ENCODE measurements at regions of chr4 and their contacts with region 1.

Region 1: DNA sequence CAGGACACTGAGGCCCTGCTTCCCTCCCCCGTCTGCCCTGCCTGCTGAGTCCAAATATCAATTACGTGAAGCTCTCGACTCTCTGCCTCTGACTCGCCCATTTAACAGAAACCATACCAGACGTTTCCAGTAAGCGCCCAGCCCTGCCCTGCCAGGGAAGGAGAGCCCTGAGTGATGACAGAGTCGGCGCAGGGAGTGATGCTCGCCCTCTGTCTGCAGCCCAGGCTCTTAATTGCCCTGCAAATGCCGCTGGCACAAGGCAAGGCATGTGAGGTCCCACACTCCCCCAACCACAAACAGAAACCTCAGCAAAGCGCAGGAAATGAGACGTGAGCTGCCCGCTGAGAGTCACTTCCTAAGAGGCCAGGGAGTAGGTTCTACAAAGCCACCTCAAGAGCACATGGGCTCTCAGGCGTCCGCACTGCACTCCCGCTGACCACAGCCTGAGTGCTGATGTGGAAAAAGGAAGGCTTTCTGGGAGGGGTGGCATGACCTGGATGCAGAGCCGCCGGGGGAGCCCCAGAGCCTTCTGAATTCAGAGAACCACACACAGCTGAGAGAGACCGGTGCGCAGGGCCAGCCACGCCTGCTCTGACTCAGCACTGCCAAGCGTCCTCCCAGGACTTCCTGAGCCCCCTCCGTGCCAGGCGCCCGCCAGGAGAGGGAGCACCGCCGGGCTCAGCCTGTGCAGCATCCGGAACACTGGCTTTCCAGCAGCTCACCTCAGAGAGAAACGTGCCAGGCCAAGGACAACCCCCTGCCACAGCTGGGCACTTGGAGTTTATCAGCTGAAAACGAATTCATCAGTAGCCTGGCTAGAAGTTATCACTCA is 5.3 kb downstream of the ZFYVE28 start:
- DNase-seq: peak; percentile 67 to 96 (median 86)
- ATAC-seq: peak; percentile 76 to 78 (median 78)
- H3K4me3 ChIP-seq: peak overlapping the region; percentile 42 to 58
- H3K4me3 Mint-ChIP-seq: peak overlapping the region; percentile 69 to 85 (median 78)
- H3K27ac ChIP-seq: peak overlapping the region; percentile 93
- H3K27ac Mint-ChIP-seq: peak overlapping the region; percentile 91 to 95
- H3K4me1 ChIP-seq: peaks cover 21 to 79% of the 10 kb centered on the region in 2 experiments
- H3K4me1 Mint-ChIP-seq: peaks cover 65 to 79% (median 79%) of the 10 kb centered on the region in 3 donors
- H3K27me3 ChIP-seq: peaks cover 0 to 22% of the 10 kb centered on the region in 2 experiments
- H3K27me3 Mint-ChIP-seq: peaks cover 3 to 7% of the 10 kb centered on the region in 2 donors

Region 2: DNA sequence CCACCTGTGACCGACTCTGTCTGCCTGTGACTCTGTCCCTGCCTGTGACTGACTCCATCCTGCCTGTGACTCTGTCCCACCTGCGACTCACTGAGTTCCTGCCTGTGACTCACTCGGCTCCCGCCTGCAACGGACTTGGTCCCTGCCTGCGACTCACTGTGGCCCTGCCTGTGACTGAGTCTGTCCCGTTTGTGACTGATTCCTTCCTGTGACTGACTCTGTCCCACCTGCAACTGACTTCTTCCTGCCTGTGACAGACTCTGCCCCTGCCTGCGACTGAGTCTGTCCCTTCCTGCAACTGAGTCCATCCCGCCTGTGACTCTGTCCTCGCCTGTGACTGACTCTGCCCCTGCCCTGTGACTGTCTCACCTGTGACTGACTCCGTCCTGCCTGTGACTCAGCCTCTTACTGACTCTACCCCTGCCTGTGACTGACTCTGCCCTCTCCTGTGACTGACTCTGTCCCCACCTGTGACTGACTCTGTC is 1075.7 kb before region 1 on chr4:
- CTCF ChIA-PET with region 1: no interaction called
- POLR2A ChIA-PET with region 1: no interaction called
- DNase-seq: peak in 3 of 35 experiments; percentile 29 to 46 (median 44)
- ATAC-seq: peak in 3 of 4 experiments; percentile 77 to 82 (median 79)
- H3K4me3 ChIP-seq: no peak overlapping the region
- H3K4me3 Mint-ChIP-seq: peak overlapping the region in 1 of 3 donors; percentile 18
- H3K27ac ChIP-seq: no peak overlapping the region
- H3K27ac Mint-ChIP-seq: peak overlapping the region; percentile 87 to 92
- H3K4me1 ChIP-seq: peaks cover 0 to 4% of the 10 kb centered on the region in 2 experiments
- H3K4me1 Mint-ChIP-seq: peaks cover 0 to 28% (median 19%) of the 10 kb centered on the region in 3 donors
- H3K27me3 ChIP-seq: no peaks in the 10 kb centered on the region
- H3K27me3 Mint-ChIP-seq: no peaks in the 10 kb centered on the region

Region 3: GRCh38 chr4:2281575-2282343 is 131.3 kb before region 1 on chr4:
- CTCF ChIA-PET with region 1: interaction called, 3 to 17 read pairs
- POLR2A ChIA-PET with region 1: interaction called, 4 to 13 read pairs
- DNase-seq: peak; percentile 59 to 97 (median 90)
- ATAC-seq: peak; percentile 93 to 97 (median 96)
- H3K4me3 ChIP-seq: peak overlapping the region in 1 of 2 donors; percentile 18
- H3K4me3 Mint-ChIP-seq: peak overlapping the region; percentile 52 to 82 (median 65)
- H3K27ac ChIP-seq: peak overlapping the region; percentile 96
- H3K27ac Mint-ChIP-seq: peak overlapping the region; percentile 98 to 99
- H3K4me1 ChIP-seq: peaks cover 20 to 63% of the 10 kb centered on the region in 2 experiments
- H3K4me1 Mint-ChIP-seq: peaks cover 34 to 56% (median 49%) of the 10 kb centered on the region in 3 donors
- H3K27me3 ChIP-seq: no peaks in the 10 kb centered on the region
- H3K27me3 Mint-ChIP-seq: no peaks in the 10 kb centered on the region

Region 4: DNA sequence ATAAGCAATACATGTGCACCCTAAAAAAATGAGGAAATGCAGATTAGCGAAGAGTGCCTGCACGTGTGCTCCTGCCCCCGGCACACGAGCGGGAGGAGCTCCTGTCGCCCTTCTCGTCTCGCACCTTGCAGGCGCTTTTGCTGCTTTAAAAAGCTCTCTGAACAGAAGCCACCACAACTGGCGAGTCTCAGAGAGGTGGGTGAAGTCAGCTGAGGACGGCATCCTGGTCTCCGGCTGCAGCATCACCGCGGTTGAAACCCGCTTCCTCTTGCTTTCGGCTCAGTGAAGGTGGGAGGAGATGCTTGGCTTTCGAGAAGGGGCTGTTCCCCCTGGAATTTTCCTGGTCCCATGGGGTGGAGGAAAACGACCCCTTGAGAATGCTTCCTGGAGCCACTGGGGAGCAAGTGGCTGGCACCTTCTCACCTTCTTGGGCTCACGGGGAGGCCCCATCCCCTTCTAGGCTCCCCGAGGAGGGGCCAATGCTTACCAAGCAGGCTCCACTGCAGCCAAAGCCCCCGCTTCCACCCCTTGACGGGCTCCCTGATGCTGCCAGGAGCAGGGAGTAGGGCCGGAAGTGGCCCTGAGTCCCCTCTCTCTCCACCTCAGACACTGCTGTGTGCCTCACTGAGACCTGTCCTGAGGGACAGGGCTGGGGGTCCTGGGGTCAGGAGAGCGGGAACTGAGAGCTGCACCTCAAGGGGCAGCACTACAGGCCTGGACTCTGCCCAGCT is 122.0 kb before region 1 on chr4:
- CTCF ChIA-PET with region 1: interaction called in 1 of 2 experiments, 12 read pairs
- POLR2A ChIA-PET with region 1: interaction called in 1 of 2 experiments, 5 read pairs
- DNase-seq: peak; percentile 48 to 93 (median 84)
- ATAC-seq: peak; percentile 92 to 94 (median 93)
- H3K4me3 ChIP-seq: peak overlapping the region; percentile 15 to 42
- H3K4me3 Mint-ChIP-seq: peak overlapping the region; percentile 56 to 79 (median 65)
- H3K27ac ChIP-seq: peak overlapping the region; percentile 96
- H3K27ac Mint-ChIP-seq: peak overlapping the region; percentile 96 to 98
- H3K4me1 ChIP-seq: peaks cover 32 to 68% of the 10 kb centered on the region in 2 experiments
- H3K4me1 Mint-ChIP-seq: peaks cover 42 to 60% (median 55%) of the 10 kb centered on the region in 3 donors
- H3K27me3 ChIP-seq: no peaks in the 10 kb centered on the region
- H3K27me3 Mint-ChIP-seq: no peaks in the 10 kb centered on the region

Region 5: DNA sequence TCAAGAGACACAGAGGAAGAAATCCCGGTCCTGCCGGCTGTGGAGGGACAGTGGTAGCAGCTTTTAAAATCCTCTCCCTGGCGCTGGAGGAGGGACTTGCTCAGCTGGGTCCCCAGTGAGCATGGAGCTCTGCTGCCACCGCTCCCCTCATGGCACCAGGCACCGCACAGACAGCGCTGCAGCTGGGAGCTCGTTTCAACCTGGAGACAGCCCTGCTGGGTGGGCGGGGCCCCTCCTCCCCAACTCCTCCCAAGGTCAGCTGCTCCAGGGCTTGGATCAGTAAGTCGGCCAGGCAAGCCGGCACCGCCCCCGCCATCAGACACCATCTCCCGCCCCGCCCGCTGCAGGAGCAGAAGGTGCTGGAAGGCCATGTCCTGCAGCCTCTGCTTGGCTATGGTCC is 11.1 kb before region 1 on chr4:
- CTCF ChIA-PET with region 1: interaction called, 4 to 11 read pairs
- POLR2A ChIA-PET with region 1: interaction called, 4 to 6 read pairs
- DNase-seq: peak in 9 of 35 experiments; percentile 10 to 46 (median 20)
- ATAC-seq: peak; percentile 57 to 73 (median 68)
- H3K4me3 ChIP-seq: peak overlapping the region; percentile 39 to 67
- H3K4me3 Mint-ChIP-seq: peak overlapping the region; percentile 65 to 84 (median 77)
- H3K27ac ChIP-seq: no peak overlapping the region
- H3K27ac Mint-ChIP-seq: no peak overlapping the region
- H3K4me1 ChIP-seq: peaks cover 0 to 26% of the 10 kb centered on the region in 2 experiments
- H3K4me1 Mint-ChIP-seq: peaks cover 29 to 55% (median 30%) of the 10 kb centered on the region in 3 donors
- H3K27me3 ChIP-seq: peaks cover 0 to 14% of the 10 kb centered on the region in 2 experiments
- H3K27me3 Mint-ChIP-seq: no peaks in the 10 kb centered on the region

Region 6: GRCh38 chr4:2425386-2426068 is 12.4 kb after region 1 on chr4:
- CTCF ChIA-PET with region 1: interaction called in 1 of 2 experiments, 13 read pairs
- POLR2A ChIA-PET with region 1: no interaction called
- DNase-seq: no peak
- ATAC-seq: no peak
- H3K4me3 ChIP-seq: no peak overlapping the region
- H3K4me3 Mint-ChIP-seq: no peak overlapping the region
- H3K27ac ChIP-seq: no peak overlapping the region
- H3K27ac Mint-ChIP-seq: no peak overlapping the region
- H3K4me1 ChIP-seq: no peaks in the 10 kb centered on the region
- H3K4me1 Mint-ChIP-seq: peaks cover 0 to 4% (median 2%) of the 10 kb centered on the region in 3 donors
- H3K27me3 ChIP-seq: peaks cover 3 to 44% of the 10 kb centered on the region in 2 experiments
- H3K27me3 Mint-ChIP-seq: peaks cover 3 to 22% of the 10 kb centered on the region in 2 donors

Measured in T-cell (primary cell).